IMR-90 (cell line): ENCODE measurements at regions of chr1 and their contacts with region 1.

Region 1: DNA sequence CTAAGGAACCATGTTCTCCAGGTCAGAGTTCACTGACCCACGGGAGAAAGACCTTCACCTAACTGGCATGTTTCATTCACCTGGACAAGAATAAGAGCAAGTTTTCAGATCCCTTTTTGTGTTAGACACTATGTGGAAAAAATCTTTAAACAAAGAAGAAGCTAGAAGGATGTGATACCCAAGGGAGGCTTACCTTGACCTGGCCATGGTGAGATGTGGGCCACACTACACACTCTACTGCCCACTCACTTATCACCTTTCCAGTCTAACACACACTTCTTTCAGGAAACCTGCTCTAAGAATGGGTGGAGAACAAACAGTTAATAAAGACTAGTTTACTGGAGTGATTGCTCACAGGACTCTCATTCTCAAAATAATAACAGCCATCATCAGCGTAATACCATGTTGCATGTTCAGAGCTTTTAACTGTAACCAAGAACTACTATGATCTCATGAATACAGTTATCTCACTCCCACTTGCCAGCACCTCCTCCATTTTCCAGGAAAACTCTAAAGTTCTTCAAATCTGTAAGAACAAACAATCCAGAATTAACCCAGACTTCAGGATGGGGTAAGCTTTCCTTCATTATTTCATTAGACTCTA is 1.4 kb downstream of the RGS8 start:
- DNase-seq: no peak
- ATAC-seq: no peak
- H3K4me3 ChIP-seq: no peak overlapping the region
- H3K27ac ChIP-seq: no peak overlapping the region
- H3K4me1 ChIP-seq: no peaks in the 10 kb centered on the region
- H3K27me3 ChIP-seq: peaks cover 18% of the 10 kb centered on the region
- CTCF ChIP-seq: no peak
- POLR2A ChIP-seq: no peak
- RAD21 ChIP-seq: no peak

Region 2: GRCh38 chr1:182348961-182349747 is 333.8 kb before region 1 on chr1:
- CTCF ChIA-PET with region 1: no interaction called
- POLR2A ChIA-PET with region 1: no interaction called
- dilution Hi-C with region 1: no loop called
- in situ Hi-C with region 1: no loop called
- intact Hi-C with region 1: no loop called
- DNase-seq: no peak
- ATAC-seq: no peak
- H3K4me3 ChIP-seq: no peak overlapping the region
- H3K27ac ChIP-seq: no peak overlapping the region
- H3K4me1 ChIP-seq: no peaks in the 10 kb centered on the region
- H3K27me3 ChIP-seq: no peaks in the 10 kb centered on the region
- CTCF ChIP-seq: no peak
- POLR2A ChIP-seq: no peak
- RAD21 ChIP-seq: no peak

Region 3: DNA sequence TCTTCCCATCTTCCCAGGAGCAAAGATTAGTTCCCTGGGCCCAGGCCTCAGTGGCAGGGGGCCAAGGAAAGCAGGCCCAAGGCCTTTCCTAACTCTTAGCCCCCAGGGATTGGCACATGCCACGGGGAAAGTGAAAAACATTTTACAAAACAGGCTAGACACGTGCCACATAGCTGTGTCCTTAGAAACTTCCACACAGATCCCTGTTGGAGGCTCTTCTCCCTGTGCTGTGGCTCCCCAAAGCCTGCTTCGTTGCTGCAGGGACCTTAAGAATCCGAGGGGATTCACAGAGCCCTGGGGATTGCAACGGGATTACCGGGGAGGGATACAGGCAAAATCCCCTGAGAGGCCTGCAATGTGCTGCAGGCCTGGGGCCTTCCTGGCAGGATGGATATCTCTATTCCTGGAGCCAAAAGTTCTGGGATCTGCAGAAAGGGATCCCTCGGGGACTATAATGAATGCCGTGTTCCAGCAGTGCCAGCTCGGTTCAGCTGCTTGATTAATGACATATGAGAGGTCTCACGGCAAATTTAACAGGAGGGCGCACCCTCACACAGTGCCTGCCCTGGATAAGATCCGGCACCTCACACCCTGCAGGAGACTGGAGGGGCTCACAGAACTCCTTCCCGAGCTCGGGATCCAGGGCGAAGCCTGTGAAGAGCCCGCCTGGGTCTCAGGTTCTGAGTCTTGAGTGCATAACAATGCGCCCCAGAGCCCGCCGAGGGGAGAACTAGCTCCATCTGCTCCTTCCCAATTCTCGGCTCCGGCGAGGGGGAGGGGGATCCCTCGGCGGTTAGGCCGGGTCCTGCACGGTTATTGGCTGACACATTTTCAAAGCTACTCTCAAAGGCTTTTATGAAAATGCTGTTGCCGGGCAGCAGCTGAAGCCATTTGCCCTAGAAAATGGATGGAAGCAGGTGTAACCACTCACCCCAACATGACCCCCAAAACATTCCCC is 16.7 kb after region 1 on chr1:
- CTCF ChIA-PET with region 1: no interaction called
- POLR2A ChIA-PET with region 1: interaction called, 13 read pairs
- dilution Hi-C with region 1: no loop called
- in situ Hi-C with region 1: no loop called
- intact Hi-C with region 1: loop called (anchors 1 kb)
- DNase-seq: no peak
- ATAC-seq: no peak
- H3K4me3 ChIP-seq: no peak overlapping the region
- H3K27ac ChIP-seq: no peak overlapping the region
- H3K4me1 ChIP-seq: no peaks in the 10 kb centered on the region
- H3K27me3 ChIP-seq: peaks cover 8% of the 10 kb centered on the region
- CTCF ChIP-seq: no peak
- POLR2A ChIP-seq: no peak
- RAD21 ChIP-seq: no peak

Region 4: DNA sequence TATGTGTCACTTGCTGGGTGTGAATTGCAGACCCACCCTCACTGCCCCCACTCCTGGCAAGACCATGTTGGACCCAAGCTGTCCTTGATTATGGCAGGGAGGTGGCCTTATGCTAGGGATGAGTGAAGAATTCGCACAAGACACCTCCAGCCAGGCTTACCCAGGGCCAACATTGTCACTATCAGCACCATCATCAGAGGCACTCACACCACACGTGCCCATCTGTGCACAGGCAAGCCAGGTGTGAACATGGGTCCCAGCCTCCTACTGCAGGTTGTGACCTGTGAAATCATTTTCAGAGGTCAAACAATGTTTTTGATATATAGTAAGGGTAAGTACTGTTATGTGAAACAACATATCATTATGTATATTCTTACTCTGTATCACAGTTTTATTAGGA is 21.7 kb after region 1 on chr1:
- CTCF ChIA-PET with region 1: no interaction called
- POLR2A ChIA-PET with region 1: interaction called, 13 read pairs
- dilution Hi-C with region 1: no loop called
- in situ Hi-C with region 1: no loop called
- intact Hi-C with region 1: loop called (anchors 1 kb)
- DNase-seq: no peak
- ATAC-seq: no peak
- H3K4me3 ChIP-seq: no peak overlapping the region
- H3K27ac ChIP-seq: no peak overlapping the region
- H3K4me1 ChIP-seq: no peaks in the 10 kb centered on the region
- H3K27me3 ChIP-seq: peaks cover 7% of the 10 kb centered on the region
- CTCF ChIP-seq: no peak
- POLR2A ChIP-seq: no peak
- RAD21 ChIP-seq: no peak